Activated CD8-positive, alpha-beta T cell treated with anti-CD3 and anti-CD28 coated beads, Interleukin-2, amount 10 ng/mL, durations not matched to agents 7 days and 5 days (primary cell): ENCODE measurements at regions of chr2 and their contacts with region 1.

Region 1: DNA sequence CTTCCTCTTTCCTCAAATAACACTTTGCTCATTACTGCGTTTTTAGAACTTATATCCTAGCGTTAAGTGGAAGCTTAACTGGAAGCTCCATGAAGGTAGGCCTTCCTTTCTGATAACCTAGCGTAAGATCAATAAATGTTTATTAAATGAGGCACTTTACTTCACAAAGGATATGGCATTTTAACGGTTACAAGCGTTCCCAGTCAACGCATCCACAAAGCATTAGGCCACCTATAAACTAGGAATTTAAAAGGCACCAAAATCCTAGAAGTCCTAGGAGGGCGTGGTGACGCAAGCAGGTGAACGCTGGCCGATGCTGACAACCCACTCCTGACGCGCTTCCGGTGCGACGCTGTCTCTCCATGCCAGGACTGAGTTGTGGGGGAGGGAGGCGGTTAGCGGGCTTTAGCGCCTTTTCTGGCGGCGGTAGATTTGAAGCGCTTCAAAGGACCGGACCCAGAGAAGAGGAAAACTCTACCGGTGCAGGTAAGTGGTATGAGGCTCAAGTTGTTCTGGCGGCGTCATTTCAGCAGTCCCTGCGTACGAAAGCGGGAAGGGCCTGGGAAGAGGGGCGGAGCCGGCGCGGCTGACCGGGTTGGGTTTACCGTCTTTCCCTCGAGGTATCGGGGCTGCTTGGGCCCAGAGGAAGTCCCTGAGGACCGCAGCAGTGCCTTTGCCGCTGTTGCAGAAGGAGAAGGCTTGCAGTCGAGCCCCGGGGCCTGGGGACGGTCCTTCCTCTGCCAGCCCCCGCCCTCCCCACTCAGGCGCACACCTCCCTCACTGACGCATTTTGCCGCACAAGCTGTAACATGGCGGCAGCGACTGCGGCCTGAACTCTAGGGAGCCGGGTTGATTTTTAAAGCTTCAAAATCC is at the start of gene PPIG:
- DNase-seq: peak; percentile 92
- ATAC-seq: peak; percentile 95
- H3K4me3 Mint-ChIP-seq: peak within 1 kb of the TSS; percentile 99
- H3K27ac Mint-ChIP-seq: peak within 1 kb of the TSS; percentile 100
- H3K4me1 Mint-ChIP-seq: peaks cover 29% of the 10 kb centered on the region
- H3K27me3 Mint-ChIP-seq: no peaks in the 10 kb centered on the region
- total RNA-seq, gene PPIG: 56.6 to 62.0 TPM

Region 2: DNA sequence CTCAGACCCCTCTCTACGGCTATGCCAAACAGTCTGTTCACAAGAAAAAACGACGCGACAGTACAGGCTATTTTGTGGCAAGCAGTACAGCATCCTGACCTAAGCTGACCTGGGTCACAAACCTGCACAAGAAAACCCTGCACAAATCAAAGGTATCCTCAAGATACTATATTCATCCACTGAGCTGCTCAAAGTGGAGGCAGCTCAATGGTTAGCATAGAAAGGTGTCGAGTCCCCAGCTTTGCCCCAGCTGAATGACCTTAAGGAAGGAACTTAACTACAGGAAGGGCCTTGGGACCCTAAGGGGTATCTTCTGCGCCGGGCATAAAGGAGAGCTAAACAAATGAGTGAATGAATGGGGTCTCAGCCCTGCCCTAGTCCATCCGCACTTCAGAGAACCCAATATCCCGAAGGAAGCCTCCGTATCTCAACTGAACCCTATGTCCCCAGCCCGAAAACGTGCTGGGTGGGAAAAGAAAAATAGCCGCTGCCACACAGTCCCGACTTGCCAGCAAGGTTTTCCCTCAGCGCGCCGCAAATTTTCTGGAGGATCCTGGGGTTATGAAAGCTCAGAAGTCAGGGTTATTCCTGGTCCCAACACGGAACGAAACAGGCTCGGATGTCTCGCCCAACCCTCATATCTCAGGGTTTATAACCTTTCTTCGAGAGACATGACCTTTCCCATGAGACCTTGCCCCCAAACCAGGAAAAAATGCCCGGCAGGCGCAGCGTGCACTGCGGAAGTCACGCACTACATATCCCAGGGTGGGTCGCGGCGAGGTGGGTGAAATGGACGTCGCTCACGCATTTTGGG is 10.9 kb before region 1 on chr2 and contains the start of gene FASTKD1:
- CTCF ChIA-PET with region 1: interaction called, 4 read pairs
- POLR2A ChIA-PET with region 1: interaction called, 28 read pairs
- DNase-seq: peak; percentile 92
- ATAC-seq: peak; percentile 97
- H3K4me3 Mint-ChIP-seq: peak within 1 kb of the TSS; percentile 99
- H3K27ac Mint-ChIP-seq: peak within 1 kb of the TSS; percentile 88
- H3K4me1 Mint-ChIP-seq: peaks cover 24% of the 10 kb centered on the region
- H3K27me3 Mint-ChIP-seq: peaks cover 3% of the 10 kb centered on the region
- total RNA-seq, gene FASTKD1: 42.1 to 52.0 TPM